ENCODE measurements at regions of chr2 and their contacts with region 1.

Region 1: GRCh38 chr2:174610243-174610995 is 12.8 kb upstream of the WIPF1 start:
- DNase-seq: no peak
- ATAC-seq: peak; percentile 37
- H3K4me3 ChIP-seq: no peak overlapping the region
- H3K27ac ChIP-seq: peak overlapping the region; percentile 89
- H3K4me1 ChIP-seq: peaks cover 71% of the 10 kb centered on the region
- H3K27me3 ChIP-seq: no peaks in the 10 kb centered on the region
- CTCF ChIP-seq: no peak
- EP300 ChIP-seq: no peak
- POLR2A ChIP-seq: no peak; the same call in 1 of the 2 replicates
- RAD21 ChIP-seq: no peak

Region 2: GRCh38 chr2:173982918-173983317 is 627.5 kb before region 1 on chr2:
- CTCF ChIA-PET with region 1: no interaction called
- POLR2A ChIA-PET with region 1: no interaction called
- RAD21 ChIA-PET with region 1: no interaction called
- SMC1A ChIA-PET with region 1: no interaction called
- in situ Hi-C with region 1: no loop called
- intact Hi-C with region 1: no loop called
- DNase-seq: no peak
- ATAC-seq: no peak
- H3K4me3 ChIP-seq: no peak overlapping the region
- H3K27ac ChIP-seq: no peak overlapping the region
- H3K4me1 ChIP-seq: no peaks in the 10 kb centered on the region
- H3K27me3 ChIP-seq: no peaks in the 10 kb centered on the region
- CTCF ChIP-seq: no peak
- EP300 ChIP-seq: no peak
- POLR2A ChIP-seq: no peak
- RAD21 ChIP-seq: no peak

Region 3: DNA sequence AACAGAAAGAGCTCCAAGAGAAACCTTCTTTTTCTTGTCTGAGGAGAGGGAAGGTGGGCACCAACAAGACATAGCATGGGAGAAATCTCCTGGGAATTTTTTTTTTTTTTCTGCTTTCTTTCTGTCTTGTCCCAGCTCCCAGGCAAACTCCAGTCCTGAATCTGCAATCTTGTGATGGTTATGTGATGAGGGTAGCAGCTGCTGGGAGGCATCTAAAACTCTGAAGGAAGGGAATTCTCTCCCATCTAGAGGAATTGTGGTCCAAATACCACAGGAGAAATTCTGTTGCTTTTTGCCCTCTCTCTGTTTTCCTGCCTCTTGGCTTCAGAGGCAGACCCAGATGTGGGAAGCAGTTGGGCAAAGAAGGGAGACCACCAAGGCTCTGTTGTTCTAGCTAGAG is 198.2 kb before region 1 on chr2:
- CTCF ChIA-PET with region 1: no interaction called
- POLR2A ChIA-PET with region 1: no interaction called
- RAD21 ChIA-PET with region 1: no interaction called
- SMC1A ChIA-PET with region 1: no interaction called
- in situ Hi-C with region 1: no loop called
- intact Hi-C with region 1: no loop called
- DNase-seq: no peak
- ATAC-seq: no peak
- H3K4me3 ChIP-seq: no peak overlapping the region
- H3K27ac ChIP-seq: no peak overlapping the region
- H3K4me1 ChIP-seq: no peaks in the 10 kb centered on the region
- H3K27me3 ChIP-seq: no peaks in the 10 kb centered on the region
- CTCF ChIP-seq: no peak
- EP300 ChIP-seq: no peak
- POLR2A ChIP-seq: no peak
- RAD21 ChIP-seq: no peak

Region 4: GRCh38 chr2:174536304-174536703 is 74.1 kb before region 1 on chr2:
- CTCF ChIA-PET with region 1: no interaction called
- POLR2A ChIA-PET with region 1: no interaction called
- RAD21 ChIA-PET with region 1: no interaction called
- SMC1A ChIA-PET with region 1: no interaction called
- in situ Hi-C with region 1: no loop called
- intact Hi-C with region 1: no loop called
- DNase-seq: no peak
- ATAC-seq: peak; percentile 33
- H3K4me3 ChIP-seq: no peak overlapping the region
- H3K27ac ChIP-seq: no peak overlapping the region
- H3K4me1 ChIP-seq: peaks cover 5% of the 10 kb centered on the region
- H3K27me3 ChIP-seq: no peaks in the 10 kb centered on the region
- CTCF ChIP-seq: no peak
- EP300 ChIP-seq: no peak
- POLR2A ChIP-seq: no peak
- RAD21 ChIP-seq: no peak

Region 5: GRCh38 chr2:174623690-174624089 is 13.3 kb after region 1 on chr2:
- CTCF ChIA-PET with region 1: interaction called, 9 read pairs
- POLR2A ChIA-PET with region 1: interaction called, 22 read pairs
- RAD21 ChIA-PET with region 1: interaction called, 34 read pairs
- SMC1A ChIA-PET with region 1: interaction called, 512 read pairs
- in situ Hi-C with region 1: no loop called
- intact Hi-C with region 1: no loop called
- DNase-seq: no peak
- ATAC-seq: peak; percentile 61
- H3K4me3 ChIP-seq: no peak overlapping the region
- H3K27ac ChIP-seq: no peak overlapping the region
- H3K4me1 ChIP-seq: no peaks in the 10 kb centered on the region; the same call in 1 of the 2 replicates
- H3K27me3 ChIP-seq: no peaks in the 10 kb centered on the region
- CTCF ChIP-seq: no peak
- EP300 ChIP-seq: no peak
- POLR2A ChIP-seq: no peak
- RAD21 ChIP-seq: no peak

Region 6: GRCh38 chr2:174787487-174788205 is 177.2 kb after region 1 on chr2:
- CTCF ChIA-PET with region 1: no interaction called
- POLR2A ChIA-PET with region 1: no interaction called
- RAD21 ChIA-PET with region 1: no interaction called
- SMC1A ChIA-PET with region 1: no interaction called
- in situ Hi-C with region 1: no loop called
- intact Hi-C with region 1: no loop called
- DNase-seq: no peak
- ATAC-seq: no peak
- H3K4me3 ChIP-seq: no peak overlapping the region
- H3K27ac ChIP-seq: no peak overlapping the region
- H3K4me1 ChIP-seq: no peaks in the 10 kb centered on the region
- H3K27me3 ChIP-seq: no peaks in the 10 kb centered on the region
- CTCF ChIP-seq: no peak
- EP300 ChIP-seq: no peak
- POLR2A ChIP-seq: no peak
- RAD21 ChIP-seq: no peak